ENCODE measurements at regions of chr9 and their contacts with region 1.

Region 1: DNA sequence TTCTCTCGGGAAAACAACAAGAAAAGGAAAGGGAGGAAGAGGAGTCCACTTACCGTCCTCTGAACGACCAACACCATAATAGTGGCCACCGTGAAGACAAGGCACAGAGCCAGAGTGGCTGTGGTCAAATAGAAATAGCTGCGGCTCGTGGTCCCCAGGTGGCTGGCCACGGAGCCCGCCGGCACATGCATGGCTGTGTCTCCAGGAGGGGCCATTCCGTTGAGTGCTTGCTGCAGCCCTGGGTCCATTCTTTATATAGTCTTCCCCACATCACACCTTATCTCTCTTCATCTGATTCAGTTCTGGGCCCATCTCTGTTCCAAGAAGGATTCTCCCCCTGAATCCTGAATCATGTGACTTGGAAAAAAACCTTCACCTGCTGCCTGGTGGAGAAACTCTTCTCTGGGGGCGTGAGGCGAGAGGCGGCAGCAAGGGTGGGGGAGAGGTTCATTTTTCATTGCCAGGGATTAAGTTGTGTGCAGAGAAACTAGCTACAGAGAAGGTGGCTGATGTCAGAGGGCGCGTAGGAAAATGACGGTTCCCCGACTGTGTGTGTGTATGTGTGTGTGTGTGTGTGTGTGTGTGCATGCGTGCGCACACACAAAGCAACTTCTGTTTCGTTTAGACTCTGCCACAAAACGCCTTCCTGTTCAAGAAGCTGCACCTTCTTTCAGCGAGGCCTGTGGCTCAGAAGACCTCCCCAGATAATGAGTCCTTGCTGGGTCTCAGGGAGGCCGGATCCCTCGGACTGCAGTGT is at the start of gene TNFSF8:
- DNase-seq: peak; percentile 83
- H3K4me3 Mint-ChIP-seq: peak within 1 kb of the TSS; percentile 94
- H3K27ac Mint-ChIP-seq: peak within 1 kb of the TSS; percentile 96
- H3K4me1 Mint-ChIP-seq: peaks cover 53% of the 10 kb centered on the region
- H3K27me3 Mint-ChIP-seq: peaks cover 2% of the 10 kb centered on the region
- total RNA-seq, gene TNFSF8: 34.6 to 34.8 TPM

Region 2: DNA sequence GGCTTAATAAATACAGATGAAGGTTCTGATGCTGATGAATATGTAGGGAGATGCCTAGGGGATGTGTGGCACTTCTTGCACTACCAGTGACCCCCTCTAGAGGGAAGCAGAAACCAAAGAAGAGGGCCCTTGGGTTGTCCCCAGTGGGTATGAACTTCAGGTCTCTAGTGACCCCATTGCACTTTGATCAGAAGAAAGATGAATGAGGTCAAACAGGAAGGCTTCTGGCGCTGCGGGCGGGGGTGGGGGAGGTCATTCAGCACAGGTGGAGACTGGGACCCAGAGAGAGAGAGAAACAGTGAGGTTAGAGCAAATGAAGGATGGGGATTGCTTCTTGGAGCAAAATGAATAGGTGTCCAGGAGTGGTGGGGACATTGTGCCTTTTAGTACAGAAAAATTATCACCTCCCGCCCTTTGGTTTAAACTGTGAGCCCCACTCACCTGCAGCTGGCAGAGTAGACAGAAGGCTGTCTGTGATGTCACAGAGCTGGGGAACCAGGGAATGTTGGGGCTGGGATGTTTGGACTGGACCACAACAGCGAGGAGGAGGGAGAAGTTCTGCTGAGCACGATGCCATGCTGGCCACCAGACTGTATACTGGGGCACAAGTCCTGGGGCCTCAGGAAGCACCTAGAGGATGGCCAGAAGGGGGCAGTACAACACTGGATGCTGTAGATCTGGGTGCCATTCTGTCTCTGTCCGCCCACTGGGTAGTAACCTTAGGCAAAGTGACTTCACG is 248.5 kb before region 1 on chr9 and contains the start of gene TEX48:
- CTCF ChIA-PET with region 1: interaction called, 37 read pairs
- POLR2A ChIA-PET with region 1: interaction called, 32 read pairs
- DNase-seq: peak; percentile 89
- H3K4me3 Mint-ChIP-seq: peak within 1 kb of the TSS; percentile 55
- H3K27ac Mint-ChIP-seq: peak within 1 kb of the TSS; percentile 84
- H3K4me1 Mint-ChIP-seq: peaks cover 57% of the 10 kb centered on the region
- H3K27me3 Mint-ChIP-seq: peaks cover 13% of the 10 kb centered on the region
- total RNA-seq, gene TEX48: 0.48 to 1.5 TPM

Region 3: GRCh38 chr9:114718801-114719221 is 211.4 kb before region 1 on chr9:
- CTCF ChIA-PET with region 1: interaction called, 3 read pairs
- POLR2A ChIA-PET with region 1: interaction called, 32 read pairs
- DNase-seq: peak; percentile 98
- H3K4me3 Mint-ChIP-seq: peak overlapping the region; percentile 3
- H3K27ac Mint-ChIP-seq: peak overlapping the region; percentile 93
- H3K4me1 Mint-ChIP-seq: peaks cover 68% of the 10 kb centered on the region
- H3K27me3 Mint-ChIP-seq: peaks cover 20% of the 10 kb centered on the region

Region 4: GRCh38 chr9:114811966-114812636 is 118.1 kb before region 1 on chr9:
- CTCF ChIA-PET with region 1: no interaction called
- POLR2A ChIA-PET with region 1: no interaction called
- DNase-seq: no peak
- H3K4me3 Mint-ChIP-seq: no peak overlapping the region
- H3K27ac Mint-ChIP-seq: no peak overlapping the region
- H3K4me1 Mint-ChIP-seq: peaks cover 14% of the 10 kb centered on the region
- H3K27me3 Mint-ChIP-seq: peaks cover 51% of the 10 kb centered on the region

Region 5: GRCh38 chr9:114894801-114895433 is 35.3 kb before region 1 on chr9:
- CTCF ChIA-PET with region 1: interaction called, 6 read pairs
- POLR2A ChIA-PET with region 1: interaction called, 373 read pairs
- DNase-seq: peak; percentile 66
- H3K4me3 Mint-ChIP-seq: no peak overlapping the region
- H3K27ac Mint-ChIP-seq: peak overlapping the region; percentile 74
- H3K4me1 Mint-ChIP-seq: peaks cover 43% of the 10 kb centered on the region
- H3K27me3 Mint-ChIP-seq: no peaks in the 10 kb centered on the region

Region 6: GRCh38 chr9:114960276-114960675 is 30.0 kb after region 1 on chr9:
- CTCF ChIA-PET with region 1: interaction called, 4 read pairs
- POLR2A ChIA-PET with region 1: interaction called, 10 read pairs
- DNase-seq: no peak
- H3K4me3 Mint-ChIP-seq: no peak overlapping the region
- H3K27ac Mint-ChIP-seq: no peak overlapping the region
- H3K4me1 Mint-ChIP-seq: peaks cover 37% of the 10 kb centered on the region
- H3K27me3 Mint-ChIP-seq: peaks cover 8% of the 10 kb centered on the region

Region 7: GRCh38 chr9:115013998-115014397 is 83.8 kb after region 1 on chr9:
- CTCF ChIA-PET with region 1: interaction called, 19 read pairs
- POLR2A ChIA-PET with region 1: interaction called, 69 read pairs
- DNase-seq: peak; percentile 83
- H3K4me3 Mint-ChIP-seq: no peak overlapping the region
- H3K27ac Mint-ChIP-seq: peak overlapping the region; percentile 24
- H3K4me1 Mint-ChIP-seq: peaks cover 30% of the 10 kb centered on the region
- H3K27me3 Mint-ChIP-seq: peaks cover 17% of the 10 kb centered on the region

Region 8: DNA sequence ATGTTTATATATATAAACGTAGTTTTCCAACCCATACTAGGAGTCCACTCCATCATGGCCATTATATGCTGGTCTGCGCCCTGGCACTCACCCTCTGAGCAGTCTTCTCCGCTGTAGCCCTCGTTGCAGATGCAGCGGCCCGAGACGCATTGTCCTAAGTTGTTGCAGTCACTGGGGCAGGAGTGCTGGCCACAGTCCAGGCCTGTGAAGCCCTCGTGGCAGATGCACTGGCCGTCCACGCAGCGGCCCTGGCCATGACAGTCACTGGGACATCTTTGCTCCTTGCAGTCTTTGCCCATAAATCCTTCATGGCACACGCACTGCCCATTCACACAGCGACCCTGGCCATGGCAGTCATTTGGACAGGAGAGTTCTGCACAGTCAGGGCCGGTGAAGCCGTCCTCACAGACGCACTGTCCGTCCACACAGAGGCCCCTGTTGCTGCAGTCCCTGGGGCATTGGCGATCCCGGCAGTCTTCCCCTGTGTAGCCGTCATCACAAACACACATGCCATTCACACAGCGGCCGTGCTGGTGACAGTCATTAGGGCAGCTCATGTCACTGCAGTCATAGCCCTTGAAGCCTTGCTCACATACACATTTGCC is 155.6 kb after region 1 on chr9:
- CTCF ChIA-PET with region 1: no interaction called
- POLR2A ChIA-PET with region 1: no interaction called
- DNase-seq: no peak
- H3K4me3 Mint-ChIP-seq: no peak overlapping the region
- H3K27ac Mint-ChIP-seq: no peak overlapping the region
- H3K4me1 Mint-ChIP-seq: no peaks in the 10 kb centered on the region
- H3K27me3 Mint-ChIP-seq: peaks cover 2% of the 10 kb centered on the region

Region 9: DNA sequence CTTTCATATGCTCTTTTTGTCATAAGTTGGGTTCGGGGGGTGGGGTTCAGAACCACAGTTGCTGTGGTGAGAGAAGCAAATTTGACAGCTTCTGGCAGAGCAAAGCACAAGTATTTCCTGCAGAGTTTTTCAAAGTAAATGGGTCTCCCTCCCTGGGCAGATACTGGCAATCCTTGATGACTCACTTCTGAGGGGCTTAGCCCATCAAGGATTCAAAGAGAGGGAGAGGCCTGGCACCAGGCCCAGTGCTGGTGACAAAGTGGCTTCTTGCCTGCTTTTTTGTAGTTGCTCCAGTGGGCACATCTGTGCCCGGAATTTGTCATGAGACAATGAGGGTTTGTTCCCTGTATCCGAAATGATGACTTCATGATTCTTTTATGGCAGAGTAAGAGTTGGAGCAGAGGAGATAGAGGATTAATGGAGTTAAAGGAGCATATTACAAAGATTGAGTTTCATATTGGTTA is 234.3 kb after region 1 on chr9:
- CTCF ChIA-PET with region 1: no interaction called
- POLR2A ChIA-PET with region 1: no interaction called
- DNase-seq: no peak
- H3K4me3 Mint-ChIP-seq: no peak overlapping the region
- H3K27ac Mint-ChIP-seq: no peak overlapping the region
- H3K4me1 Mint-ChIP-seq: no peaks in the 10 kb centered on the region
- H3K27me3 Mint-ChIP-seq: peaks cover 2% of the 10 kb centered on the region

Measured in activated CD4-positive, alpha-beta memory T cell treated with anti-CD3 and anti-CD28 coated beads, Interleukin-2, amount 10 ng/mL, durations not matched to agents 7 days and 5 days (primary cell).